HepG2 (cell line): ENCODE measurements at regions of chr7 and their contacts with region 1.

Region 1: DNA sequence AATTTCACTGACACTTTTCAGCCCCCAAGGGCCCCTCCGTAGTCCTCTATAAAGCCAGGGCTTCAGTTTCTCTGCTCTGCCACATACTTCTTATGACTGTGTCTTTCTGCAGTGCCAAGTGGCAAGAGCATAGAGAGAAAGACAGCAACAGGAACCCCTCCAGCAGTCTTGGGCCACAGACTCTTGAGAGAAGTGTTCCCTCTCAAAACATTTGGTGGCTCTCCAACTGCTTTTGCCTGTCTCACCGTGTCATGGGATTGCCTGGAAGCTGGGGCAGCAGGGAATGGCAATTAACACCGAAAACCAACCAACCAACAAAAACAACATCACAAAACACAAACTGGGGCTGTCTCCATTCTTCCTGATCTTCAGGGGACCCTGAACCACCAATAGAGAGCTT is 73.8 kb upstream of the ELN start:
- DNase-seq: no peak
- ATAC-seq: no peak
- H3K4me3 ChIP-seq: no peak overlapping the region
- H3K27ac ChIP-seq: no peak overlapping the region
- H3K4me1 ChIP-seq: no peaks in the 10 kb centered on the region
- H3K27me3 ChIP-seq: 0 out of 5 replicates have a peak, but pooled peaks cover 0 to 6% of the 10 kb centered on the region in 2 experiments
- CTCF ChIP-seq: no peak
- EP300 ChIP-seq: no peak
- POLR2A ChIP-seq: no peak
- RAD21 ChIP-seq: no peak

Region 2: DNA sequence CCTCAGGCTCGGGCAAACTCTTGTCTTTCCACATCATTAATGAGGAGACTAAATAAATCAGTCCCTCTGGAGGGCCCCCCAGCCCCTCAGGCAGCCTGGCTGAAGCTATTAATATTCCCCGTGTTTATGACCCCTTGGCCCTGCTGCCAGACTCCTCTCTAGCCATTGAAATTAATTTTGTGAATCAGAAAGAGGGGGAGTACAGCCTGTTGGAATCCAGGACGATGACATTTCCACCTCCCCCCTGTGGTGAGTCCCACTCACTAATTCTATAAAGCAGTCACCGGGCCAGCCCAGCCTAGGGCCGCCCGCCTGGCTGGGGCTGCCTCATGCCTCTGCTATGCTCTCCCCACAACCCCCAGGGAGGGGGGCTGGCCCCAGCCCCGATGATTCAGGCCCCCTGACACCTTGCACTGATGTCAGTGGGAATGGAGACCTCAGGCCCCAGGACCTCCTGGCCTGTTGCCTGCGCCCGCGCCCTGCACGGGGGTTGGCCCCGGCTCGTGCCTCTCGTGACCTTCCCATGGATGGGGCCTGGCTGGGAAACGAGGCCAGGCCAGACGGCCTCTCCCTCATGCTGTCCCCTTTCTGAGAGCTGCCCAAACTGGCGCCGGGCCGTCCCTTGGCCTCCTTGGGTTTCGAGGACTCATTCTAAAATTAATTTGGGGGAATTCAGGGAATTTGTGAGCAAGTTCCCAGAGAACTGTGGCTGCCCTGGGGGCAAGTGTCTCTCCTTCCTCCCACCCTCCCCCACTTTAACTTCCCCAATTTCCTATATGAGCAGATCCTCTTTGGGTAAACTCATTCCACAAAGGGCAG is 59.2 kb before region 1 on chr7:
- CTCF ChIA-PET with region 1: no interaction called
- POLR2A ChIA-PET with region 1: no interaction called
- in situ Hi-C with region 1: no loop called
- intact Hi-C with region 1: loop called (anchors 10 kb)
- DNase-seq: no peak
- ATAC-seq: peak; percentile 41; the same call in 1 of the 3 replicates
- H3K4me3 ChIP-seq: no peak overlapping the region
- H3K27ac ChIP-seq: no peak overlapping the region
- H3K4me1 ChIP-seq: no peaks in the 10 kb centered on the region
- H3K27me3 ChIP-seq: peaks cover 2 to 38% of the 10 kb centered on the region in 2 experiments; a peak in 4 of 5 replicates
- CTCF ChIP-seq: no peak
- EP300 ChIP-seq: no peak
- POLR2A ChIP-seq: no peak
- RAD21 ChIP-seq: no peak